Activated CD8-positive, alpha-beta memory T cell treated with anti-CD3 and anti-CD28 coated beads, Interleukin-2, amount 10 ng/mL, durations not matched to agents 7 days and 5 days (primary cell): ENCODE measurements at regions of chr19 and their contacts with region 1.

Region 1: DNA sequence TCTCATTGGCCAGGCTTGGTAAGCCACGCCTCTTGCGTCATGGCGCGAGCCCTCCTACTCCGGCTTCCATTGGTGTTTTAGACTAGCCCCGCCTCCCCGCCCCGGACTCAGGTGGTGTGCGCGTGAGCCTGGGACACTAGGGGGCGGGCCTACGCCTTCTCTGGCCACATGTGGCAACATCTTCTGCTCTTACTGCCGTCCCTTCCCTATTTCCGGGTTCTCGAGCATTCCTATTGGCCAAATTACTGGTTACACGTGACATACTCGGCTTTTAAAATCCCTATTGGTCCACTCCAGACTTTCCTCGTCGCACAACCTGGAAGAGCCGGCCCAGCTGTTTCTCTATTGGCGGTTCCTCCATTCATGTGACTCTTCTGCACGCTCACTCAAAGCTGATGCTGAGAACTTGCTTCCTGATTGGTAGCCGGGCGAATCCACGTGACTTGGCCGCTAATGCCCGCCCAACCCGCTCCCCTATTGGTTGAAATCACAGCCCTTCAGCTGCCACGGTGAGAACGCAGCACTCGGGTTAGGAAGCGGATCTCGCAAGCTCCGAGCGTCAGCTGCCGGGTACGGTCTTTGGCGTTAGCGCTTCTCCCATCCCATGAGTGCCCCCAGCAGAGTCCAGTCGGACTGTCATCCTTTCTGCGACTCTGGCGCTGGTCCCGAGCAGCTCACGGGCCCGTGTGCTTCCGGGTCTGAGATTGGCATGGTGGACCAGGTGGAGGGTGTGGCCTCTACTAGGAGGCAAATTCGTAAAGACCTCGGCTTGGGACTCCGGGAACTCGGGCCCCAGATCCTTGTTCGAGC is at the start of gene BLOC1S3:
- DNase-seq: peak; percentile 100
- ATAC-seq: peak; percentile 90
- H3K4me3 Mint-ChIP-seq: peak within 1 kb of the TSS; percentile 84
- H3K27ac Mint-ChIP-seq: peak within 1 kb of the TSS; percentile 92
- H3K4me1 Mint-ChIP-seq: peaks cover 37% of the 10 kb centered on the region
- H3K27me3 Mint-ChIP-seq: no peaks in the 10 kb centered on the region
- total RNA-seq, gene BLOC1S3: 15.7 to 17.6 TPM

Region 2: DNA sequence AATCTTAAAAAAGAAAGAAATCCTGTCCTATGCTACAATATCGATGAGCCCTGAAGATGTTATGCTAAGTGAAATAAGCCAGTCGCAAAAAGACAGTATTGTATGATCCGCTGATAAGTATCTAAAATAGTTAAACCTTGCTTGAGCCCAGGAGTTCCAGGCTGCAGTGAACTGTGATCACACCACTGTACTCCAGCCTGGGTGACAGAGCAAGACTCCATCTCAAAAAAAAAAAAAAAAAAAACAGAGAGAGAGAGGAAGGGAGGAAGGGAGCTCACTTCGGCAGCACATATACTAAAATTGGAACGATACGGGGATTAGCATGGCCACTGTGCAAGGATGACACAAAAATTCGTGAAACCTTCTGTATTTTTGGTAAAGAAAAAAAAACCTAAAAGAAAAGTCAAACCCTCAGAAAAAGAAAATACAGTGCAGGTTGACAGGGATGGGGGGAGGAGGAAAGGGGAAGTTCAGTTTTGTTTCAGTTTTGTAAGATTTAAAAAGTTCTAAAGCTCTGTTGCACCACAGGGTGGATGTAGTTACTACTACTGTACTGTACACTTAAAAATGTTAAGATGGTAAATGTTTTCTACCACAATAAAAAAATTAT is 131.2 kb before region 1 on chr19:
- CTCF ChIA-PET with region 1: no interaction called
- DNase-seq: no peak
- ATAC-seq: peak; percentile 45
- H3K4me3 Mint-ChIP-seq: no peak overlapping the region
- H3K27ac Mint-ChIP-seq: peak overlapping the region; percentile 70
- H3K4me1 Mint-ChIP-seq: peaks cover 34% of the 10 kb centered on the region
- H3K27me3 Mint-ChIP-seq: no peaks in the 10 kb centered on the region

Region 3: GRCh38 chr19:45079063-45079910 is 99.2 kb before region 1 on chr19 and contains the start of gene GEMIN7:
- CTCF ChIA-PET with region 1: no interaction called
- DNase-seq: peak; percentile 83
- ATAC-seq: peak; percentile 55
- H3K4me3 Mint-ChIP-seq: peak within 1 kb of the TSS; percentile 96
- H3K27ac Mint-ChIP-seq: peak within 1 kb of the TSS; percentile 83
- H3K4me1 Mint-ChIP-seq: peaks cover 54% of the 10 kb centered on the region
- H3K27me3 Mint-ChIP-seq: no peaks in the 10 kb centered on the region
- total RNA-seq, gene GEMIN7: 26.2 to 34.4 TPM

Region 4: GRCh38 chr19:45250214-45250831 is 71.9 kb after region 1 on chr19:
- CTCF ChIA-PET with region 1: interaction called, 12 read pairs
- DNase-seq: no peak
- ATAC-seq: no peak
- H3K4me3 Mint-ChIP-seq: peak overlapping the region; percentile 78
- H3K27ac Mint-ChIP-seq: peak overlapping the region; percentile 78
- H3K4me1 Mint-ChIP-seq: peaks cover 35% of the 10 kb centered on the region
- H3K27me3 Mint-ChIP-seq: peaks cover 2% of the 10 kb centered on the region